ENCODE measurements at regions of chr9 and their contacts with region 1.

Region 1: GRCh38 chr9:121322037-121322775 is 47.8 kb downstream of the STOM start:
- DNase-seq: no peak
- H3K4me3 ChIP-seq: no peak overlapping the region
- H3K27ac ChIP-seq: peak overlapping the region in 1 of 2 experiments; percentile 81; a peak in 2 of 4 replicates
- H3K4me1 ChIP-seq: peaks cover 0 to 5% of the 10 kb centered on the region in 2 experiments; a peak in 2 of 4 replicates
- H3K27me3 ChIP-seq: no peaks in the 10 kb centered on the region
- CTCF ChIP-seq: no peak
- EP300 ChIP-seq: no peak
- RAD21 ChIP-seq: no peak

Region 2: GRCh38 chr9:121074635-121075385 is 247.4 kb before region 1 on chr9 and contains the start of gene CNTRL:
- CTCF ChIA-PET with region 1: no interaction called
- POLR2A ChIA-PET with region 1: no interaction called
- DNase-seq: peak; percentile 93
- H3K4me3 ChIP-seq: peak within 1 kb of the TSS; percentile 76 to 84
- H3K27ac ChIP-seq: peak within 1 kb of the TSS; percentile 93 to 94
- H3K4me1 ChIP-seq: peaks cover 7 to 12% of the 10 kb centered on the region in 2 experiments; a peak in 3 of 4 replicates
- H3K27me3 ChIP-seq: no peaks in the 10 kb centered on the region
- CTCF ChIP-seq: no peak
- EP300 ChIP-seq: no peak
- RAD21 ChIP-seq: no peak
- polyA plus RNA-seq, gene CNTRL: 3.6 and 4.1 TPM in 2 replicates

Region 3: DNA sequence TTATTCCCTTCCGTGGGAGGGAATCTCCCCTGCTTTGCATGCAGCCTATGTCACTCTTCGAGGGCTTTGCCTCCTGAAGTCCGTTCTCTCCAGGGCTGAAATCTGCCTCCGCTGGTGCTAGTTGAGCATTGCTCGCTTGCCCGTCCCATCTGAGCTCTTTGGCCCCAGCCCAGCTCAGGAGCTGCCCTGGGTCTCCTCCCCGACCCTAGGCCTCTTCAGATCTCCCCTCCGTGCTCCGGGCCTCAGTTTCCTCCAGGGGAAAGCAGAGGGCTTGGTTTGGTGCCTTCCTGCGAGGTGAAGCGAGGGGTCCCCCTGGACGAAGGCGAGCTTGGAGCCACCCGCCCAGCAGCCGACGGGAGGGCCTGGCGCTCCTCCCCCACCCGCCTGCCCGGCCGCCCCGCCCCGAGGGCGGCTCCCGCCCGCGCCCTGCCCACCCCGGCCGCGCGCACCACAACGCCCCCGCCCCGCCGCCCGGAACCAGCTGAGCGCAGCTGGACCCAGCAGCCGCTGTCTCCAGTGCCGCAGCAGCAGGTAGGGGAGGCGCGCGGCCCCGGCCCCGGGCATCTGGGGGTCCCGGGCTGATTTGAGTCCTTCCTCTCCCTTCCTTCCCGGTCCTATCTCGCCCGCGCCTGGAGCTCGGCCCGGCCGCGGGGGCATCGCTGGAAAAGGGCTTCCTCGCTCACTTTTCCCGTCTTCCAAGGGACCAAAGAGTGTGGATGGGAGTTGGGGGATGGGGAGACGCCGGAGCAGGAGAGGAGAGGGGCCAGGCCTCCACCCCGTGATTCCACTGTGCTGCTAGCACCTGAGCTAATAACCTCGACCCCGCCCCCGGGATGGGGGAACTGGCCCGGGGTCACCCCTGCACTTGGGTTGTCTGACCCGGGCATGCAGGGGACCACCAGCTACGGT is 54.3 kb before region 1 on chr9 and contains the start of gene GSN:
- CTCF ChIA-PET with region 1: interaction called, 31 read pairs
- POLR2A ChIA-PET with region 1: no interaction called
- DNase-seq: peak; percentile 95
- H3K4me3 ChIP-seq: peak within 1 kb of the TSS; percentile 72 to 92
- H3K27ac ChIP-seq: peak within 1 kb of the TSS; percentile 47 to 71; a peak in 3 of 4 replicates
- H3K4me1 ChIP-seq: peaks cover 18 to 37% of the 10 kb centered on the region in 2 experiments; a peak in 3 of 4 replicates
- H3K27me3 ChIP-seq: no peaks in the 10 kb centered on the region
- CTCF ChIP-seq: peak; percentile 21; the same call in 1 of the 2 replicates
- EP300 ChIP-seq: no peak
- RAD21 ChIP-seq: no peak
- polyA plus RNA-seq, gene GSN: 168 and 172 TPM in 2 replicates

Region 4: DNA sequence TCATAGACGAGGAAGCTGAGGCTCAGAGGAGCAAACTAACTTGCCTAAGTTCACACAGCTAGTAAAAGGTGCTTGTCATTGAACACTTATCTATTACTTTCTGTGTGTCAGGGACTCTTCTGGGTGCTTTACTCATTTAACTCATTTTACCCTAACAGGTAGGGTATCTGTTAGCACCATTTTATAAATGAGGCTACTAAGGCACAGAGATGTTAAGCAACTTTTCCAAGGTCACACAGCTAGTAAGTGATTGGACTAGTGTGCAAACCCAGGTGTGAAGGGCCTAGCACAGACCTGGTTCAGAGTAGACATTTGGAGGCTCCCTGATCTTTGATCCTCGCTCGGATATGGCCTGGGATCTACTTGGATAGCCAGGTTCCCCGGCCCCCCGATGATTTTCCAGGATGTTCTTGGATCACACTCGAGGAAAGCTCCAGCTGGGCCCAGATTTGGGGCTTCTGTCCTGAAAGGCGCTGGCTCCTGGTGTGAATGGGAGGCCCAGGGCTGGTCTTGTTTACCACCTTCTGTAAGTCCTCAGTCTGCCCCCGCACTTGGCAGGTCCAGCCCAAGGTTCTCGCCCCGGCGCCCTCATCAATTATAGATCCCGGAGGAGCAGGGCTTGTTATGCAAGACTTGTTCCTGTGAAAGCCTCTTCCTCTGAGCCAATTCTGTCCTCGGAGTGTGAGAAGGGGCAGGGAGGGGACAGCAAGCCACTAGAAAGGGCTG is 16.8 kb before region 1 on chr9:
- CTCF ChIA-PET with region 1: interaction called, 55 read pairs
- POLR2A ChIA-PET with region 1: no interaction called
- DNase-seq: no peak
- H3K4me3 ChIP-seq: no peak overlapping the region
- H3K27ac ChIP-seq: no peak overlapping the region
- H3K4me1 ChIP-seq: peaks cover 0 to 3% of the 10 kb centered on the region in 2 experiments; a peak in 1 of 4 replicates
- H3K27me3 ChIP-seq: no peaks in the 10 kb centered on the region
- CTCF ChIP-seq: no peak
- EP300 ChIP-seq: no peak
- RAD21 ChIP-seq: no peak

Region 5: DNA sequence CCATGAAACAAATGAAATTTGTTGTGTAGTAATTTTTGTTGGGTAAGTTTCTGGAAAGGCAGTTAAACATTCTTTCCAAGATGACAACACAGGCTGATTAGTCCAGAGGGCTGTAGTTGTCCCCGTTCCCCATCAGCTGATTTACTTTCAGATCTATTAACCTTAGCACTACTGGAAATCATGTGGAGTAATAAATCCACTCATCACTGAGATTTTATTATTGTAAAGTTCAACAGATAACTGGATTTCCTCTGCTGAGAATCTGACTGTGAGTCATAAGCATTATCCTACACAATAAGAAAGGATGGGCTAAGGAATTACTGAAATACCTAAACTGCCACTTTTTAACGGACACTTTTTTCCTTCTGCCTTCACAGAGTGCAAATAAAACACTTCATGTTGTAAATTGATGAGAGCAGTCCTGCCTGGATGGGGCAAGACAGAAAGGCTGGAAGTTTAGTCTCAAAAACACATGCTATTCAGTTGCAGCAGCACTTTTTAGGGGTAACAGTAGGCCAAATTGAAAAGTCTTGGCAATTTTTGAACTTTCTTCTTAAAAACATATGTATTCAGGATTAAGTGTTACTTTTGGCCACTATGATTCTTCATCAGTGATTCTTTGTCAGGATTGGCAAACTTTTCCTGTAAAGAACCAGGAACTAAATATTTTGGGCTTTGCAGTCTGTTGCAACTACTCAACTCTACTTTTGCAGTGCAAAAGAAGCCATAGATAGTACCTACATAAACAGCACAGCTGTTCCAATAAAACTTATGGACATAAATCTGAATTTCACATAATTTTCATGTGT is 40.8 kb after region 1 on chr9:
- CTCF ChIA-PET with region 1: interaction called, 29 read pairs
- POLR2A ChIA-PET with region 1: no interaction called
- DNase-seq: no peak
- H3K4me3 ChIP-seq: no peak overlapping the region
- H3K27ac ChIP-seq: peak overlapping the region; percentile 82 to 92
- H3K4me1 ChIP-seq: peaks cover 20 to 68% of the 10 kb centered on the region in 2 experiments; a peak in 3 of 4 replicates
- H3K27me3 ChIP-seq: no peaks in the 10 kb centered on the region
- CTCF ChIP-seq: no peak
- EP300 ChIP-seq: peak; percentile 40 to 81
- RAD21 ChIP-seq: no peak

Region 6: DNA sequence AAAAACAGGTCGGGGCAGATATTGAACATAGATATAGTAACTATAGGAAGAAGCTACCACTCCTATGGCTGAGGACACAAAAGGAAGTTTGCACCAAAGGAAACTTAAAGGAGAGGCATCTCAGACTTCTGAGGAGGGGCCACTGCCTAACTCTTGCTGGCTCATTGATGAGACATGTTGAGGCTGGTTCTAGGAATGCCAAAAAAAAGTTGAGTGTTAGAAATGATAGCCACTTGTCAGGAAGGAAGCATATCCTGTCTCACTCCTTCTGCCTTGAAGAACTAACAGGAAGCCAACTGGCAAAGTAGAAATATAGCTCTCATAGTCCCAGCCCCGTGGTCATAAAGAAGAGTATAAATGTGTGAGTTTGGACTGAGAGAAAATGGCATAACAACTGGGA is 71.1 kb after region 1 on chr9:
- CTCF ChIA-PET with region 1: interaction called, 316 read pairs
- POLR2A ChIA-PET with region 1: no interaction called
- DNase-seq: no peak
- H3K4me3 ChIP-seq: no peak overlapping the region
- H3K27ac ChIP-seq: peak overlapping the region in 1 of 2 experiments; percentile 17; a peak in 1 of 4 replicates
- H3K4me1 ChIP-seq: peaks cover 0 to 12% of the 10 kb centered on the region in 2 experiments; a peak in 1 of 4 replicates
- H3K27me3 ChIP-seq: no peaks in the 10 kb centered on the region
- CTCF ChIP-seq: no peak
- EP300 ChIP-seq: no peak
- RAD21 ChIP-seq: no peak

Region 7: GRCh38 chr9:121510766-121511550 is 188.8 kb after region 1 on chr9:
- CTCF ChIA-PET with region 1: interaction called, 10 read pairs
- POLR2A ChIA-PET with region 1: no interaction called
- DNase-seq: peak; percentile 77
- H3K4me3 ChIP-seq: no peak overlapping the region
- H3K27ac ChIP-seq: peak overlapping the region; percentile 40 to 96; a peak in 3 of 4 replicates
- H3K4me1 ChIP-seq: peaks cover 0 to 12% of the 10 kb centered on the region in 2 experiments; a peak in 2 of 4 replicates
- H3K27me3 ChIP-seq: no peaks in the 10 kb centered on the region
- CTCF ChIP-seq: no peak
- EP300 ChIP-seq: peak in 1 of 2 experiments; percentile 85; a peak in 2 of 4 replicates
- RAD21 ChIP-seq: peak; percentile 10; the same call in 1 of the 2 replicates

Measured in SK-N-SH (cell line).